Left ventricle myocardium inferior (tissue), 1 donor: ENCODE measurements at regions of chr17 and their contacts with region 1.

Region 1: DNA sequence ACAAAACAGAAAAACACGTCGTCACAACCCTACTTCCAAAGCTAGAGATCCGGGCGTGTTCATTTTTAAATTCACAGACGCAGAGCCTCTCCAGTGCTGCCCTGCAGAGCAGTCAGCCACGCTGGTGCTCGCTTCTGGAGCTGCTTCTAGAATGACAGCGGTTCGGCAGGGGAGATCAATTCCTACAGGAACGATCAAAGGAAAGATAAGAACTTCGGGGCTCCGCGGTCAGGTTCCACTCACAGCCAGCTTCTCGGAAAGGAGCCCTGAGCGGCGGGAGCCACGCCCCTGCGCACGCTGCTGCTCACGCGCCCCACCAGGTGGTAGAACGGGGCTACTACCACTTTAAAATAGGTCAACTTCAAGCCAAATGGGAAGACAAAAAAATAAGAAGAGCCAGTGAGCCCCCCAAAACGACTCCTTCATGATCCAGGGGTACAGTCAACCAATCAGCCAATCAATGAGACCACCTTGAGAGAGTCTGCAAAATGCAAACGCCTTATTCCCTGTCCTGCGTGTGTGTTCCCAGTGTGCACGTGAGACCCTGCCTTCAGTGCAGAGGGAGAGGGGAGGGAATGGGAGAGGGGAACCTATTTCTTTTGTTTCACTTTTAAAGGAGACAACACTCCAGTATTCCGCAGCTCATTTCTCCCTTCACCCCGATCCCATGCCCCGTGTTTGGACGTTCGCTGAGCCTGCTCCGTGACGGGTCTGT is 209.7 kb downstream of the RBFOX3 start:
- DNase-seq: peak; percentile 60
- H3K4me3 ChIP-seq: peak overlapping the region; percentile 34
- H3K27ac ChIP-seq: no peak overlapping the region
- H3K4me1 ChIP-seq: peaks cover 10% of the 10 kb centered on the region
- H3K27me3 ChIP-seq: peaks cover 99% of the 10 kb centered on the region
- CTCF ChIP-seq: peak; percentile 93

Region 2: GRCh38 chr17:79114458-79115301 is 286.5 kb before region 1 on chr17:
- intact Hi-C with region 1: loop called (anchors 5 kb)
- DNase-seq: peak; percentile 54
- H3K4me3 ChIP-seq: no peak overlapping the region
- H3K27ac ChIP-seq: no peak overlapping the region
- H3K4me1 ChIP-seq: peaks cover 12% of the 10 kb centered on the region
- H3K27me3 ChIP-seq: peaks cover 98% of the 10 kb centered on the region
- CTCF ChIP-seq: no peak

Region 3: DNA sequence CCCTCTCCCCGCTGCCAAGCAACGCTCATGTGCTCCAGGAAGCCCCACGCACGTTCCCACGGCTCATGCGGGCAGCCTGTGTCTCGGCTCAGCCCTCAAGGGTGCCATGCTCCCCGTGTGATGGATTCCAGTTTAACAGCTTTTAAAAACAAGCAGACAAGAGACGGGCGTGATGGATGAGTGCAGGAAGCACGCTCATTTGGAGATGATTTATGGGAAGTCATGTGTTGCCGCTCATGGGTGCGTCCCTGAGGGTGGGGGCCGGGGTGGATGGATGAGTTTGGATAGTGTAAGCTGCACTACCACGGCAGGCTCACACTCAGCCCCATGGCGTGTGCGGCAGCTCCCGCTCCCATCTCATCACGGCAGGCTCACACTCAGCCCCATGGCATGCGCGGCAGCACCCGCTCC is 76.9 kb after region 1 on chr17:
- intact Hi-C with region 1: no loop called
- DNase-seq: no peak
- H3K4me3 ChIP-seq: no peak overlapping the region
- H3K27ac ChIP-seq: no peak overlapping the region
- H3K4me1 ChIP-seq: no peaks in the 10 kb centered on the region
- H3K27me3 ChIP-seq: peaks cover 100% of the 10 kb centered on the region
- CTCF ChIP-seq: no peak